H1 (cell line): ENCODE measurements at regions of chr11 and their contacts with region 1.

Region 1: DNA sequence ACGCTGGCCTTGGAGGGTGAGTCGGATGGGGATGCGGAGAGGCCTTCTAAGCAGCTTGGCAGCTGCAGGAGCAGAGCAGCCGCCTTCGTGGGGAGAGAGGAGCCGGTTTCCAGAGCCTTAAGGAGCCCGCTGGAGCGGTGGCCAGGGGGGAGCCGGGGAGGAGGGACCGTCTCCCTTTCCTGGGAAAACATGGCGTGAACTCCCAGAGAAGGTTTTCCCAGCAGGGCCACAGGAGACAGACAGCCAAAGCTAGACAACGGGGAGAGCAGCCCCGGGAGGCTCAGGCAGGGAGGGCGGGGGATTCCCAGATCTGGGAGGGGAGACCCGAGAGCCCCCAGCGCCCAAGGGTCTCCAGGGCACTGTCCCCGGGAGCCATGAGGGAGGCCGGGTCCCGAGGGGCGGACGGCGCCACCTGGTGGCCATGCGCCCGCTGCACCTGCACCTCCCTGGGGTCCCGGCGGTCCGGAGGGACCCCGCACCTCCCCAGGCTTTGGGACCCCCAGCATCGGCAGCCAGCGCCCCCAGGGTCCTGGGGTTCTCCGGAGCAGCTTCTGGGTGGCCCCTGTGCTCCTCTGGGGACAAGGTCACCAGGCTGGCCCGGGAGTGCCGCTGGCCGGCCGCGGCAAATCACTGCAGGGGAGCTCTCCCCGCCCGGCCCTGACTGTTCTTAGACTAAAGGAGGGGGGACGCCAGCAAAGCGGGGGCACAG is 2.4 kb upstream of the SYT8 start:
- DNase-seq: peak in 1 of 2 experiments; percentile 92
- H3K4me3 ChIP-seq: peak overlapping the region; percentile 9 to 68 (median 44); a peak in 7 of 8 replicates
- H3K27ac ChIP-seq: no peak overlapping the region
- H3K4me1 ChIP-seq: peaks cover 0 to 4% (median 2%) of the 10 kb centered on the region in 4 experiments; a peak in 4 of 7 replicates
- H3K27me3 ChIP-seq: peaks cover 0 to 6% (median 1%) of the 10 kb centered on the region in 4 experiments; a peak in 3 of 7 replicates
- CTCF ChIP-seq: peak in 2 of 3 experiments; percentile 76 to 89; a peak in 3 of 4 replicates
- EP300 ChIP-seq: no peak
- POLR2A ChIP-seq: no peak
- RAD21 ChIP-seq: peak; percentile 67 to 79

Region 2: DNA sequence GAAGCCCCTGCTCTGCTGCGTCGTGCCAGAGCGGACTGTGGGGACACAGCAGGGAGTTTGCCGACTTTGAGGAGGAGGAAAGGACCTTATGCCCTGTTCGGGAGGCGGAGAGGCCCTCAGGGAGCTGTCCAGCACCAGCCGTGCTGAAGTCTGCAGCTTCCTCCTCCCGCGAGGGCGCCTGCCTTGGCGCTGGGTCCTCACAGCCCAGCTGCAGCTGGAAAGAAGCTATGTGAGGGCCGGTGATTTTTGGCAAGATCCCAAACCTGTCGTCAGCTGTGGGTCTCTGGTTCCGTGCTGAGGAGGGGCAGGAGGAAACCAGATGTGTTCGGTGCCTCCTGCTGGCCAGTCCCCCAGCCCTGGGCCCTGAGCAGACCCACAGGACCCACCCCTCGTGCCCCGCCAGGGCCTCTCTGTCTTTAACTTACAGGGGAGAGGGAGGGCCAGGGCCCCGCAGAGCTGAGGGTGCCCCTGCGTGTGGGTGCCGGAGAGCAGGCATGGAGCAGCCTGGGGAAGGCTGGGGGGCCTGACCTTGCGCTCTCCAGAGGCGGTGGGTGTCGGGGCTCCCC is 430.6 kb before region 1 on chr11:
- CTCF ChIA-PET with region 1: no interaction called
- POLR2A ChIA-PET with region 1: no interaction called
- DNase-seq: peak in 1 of 2 experiments; percentile 92
- H3K4me3 ChIP-seq: no peak overlapping the region
- H3K27ac ChIP-seq: no peak overlapping the region
- H3K4me1 ChIP-seq: peaks cover 0 to 2% (median 0%) of the 10 kb centered on the region in 4 experiments; a peak in 1 of 7 replicates
- H3K27me3 ChIP-seq: no peaks in the 10 kb centered on the region
- CTCF ChIP-seq: no peak
- EP300 ChIP-seq: no peak
- POLR2A ChIP-seq: no peak
- RAD21 ChIP-seq: peak in 1 of 2 experiments; percentile 7; a peak in 2 of 4 replicates

Region 3: DNA sequence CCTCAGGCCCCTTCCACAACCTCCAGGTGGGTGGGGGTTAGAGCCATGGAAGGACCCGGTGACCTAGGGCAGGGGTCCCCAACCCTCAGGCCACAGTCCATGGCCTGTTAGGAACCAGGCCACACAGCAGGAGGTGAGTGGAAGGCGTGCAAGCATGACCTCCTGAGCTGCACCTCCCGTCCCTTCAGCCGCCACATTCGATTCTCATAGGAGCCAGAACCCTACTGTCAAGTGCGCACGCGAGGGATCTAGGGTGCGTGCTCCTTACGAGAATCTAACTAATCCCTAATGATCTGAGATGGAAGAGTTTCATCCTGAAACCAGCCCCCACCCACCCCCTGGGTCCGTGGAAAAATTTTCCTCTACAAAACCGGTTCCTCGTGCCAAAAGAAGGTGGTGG is 206.8 kb before region 1 on chr11:
- CTCF ChIA-PET with region 1: no interaction called
- POLR2A ChIA-PET with region 1: no interaction called
- DNase-seq: no peak
- H3K4me3 ChIP-seq: no peak overlapping the region
- H3K27ac ChIP-seq: no peak overlapping the region
- H3K4me1 ChIP-seq: peaks cover 0 to 4% (median 1%) of the 10 kb centered on the region in 4 experiments; a peak in 5 of 7 replicates
- H3K27me3 ChIP-seq: peaks cover 0 to 16% (median 3%) of the 10 kb centered on the region in 4 experiments; a peak in 5 of 7 replicates
- CTCF ChIP-seq: no peak
- EP300 ChIP-seq: no peak
- POLR2A ChIP-seq: no peak
- RAD21 ChIP-seq: no peak

Region 4: DNA sequence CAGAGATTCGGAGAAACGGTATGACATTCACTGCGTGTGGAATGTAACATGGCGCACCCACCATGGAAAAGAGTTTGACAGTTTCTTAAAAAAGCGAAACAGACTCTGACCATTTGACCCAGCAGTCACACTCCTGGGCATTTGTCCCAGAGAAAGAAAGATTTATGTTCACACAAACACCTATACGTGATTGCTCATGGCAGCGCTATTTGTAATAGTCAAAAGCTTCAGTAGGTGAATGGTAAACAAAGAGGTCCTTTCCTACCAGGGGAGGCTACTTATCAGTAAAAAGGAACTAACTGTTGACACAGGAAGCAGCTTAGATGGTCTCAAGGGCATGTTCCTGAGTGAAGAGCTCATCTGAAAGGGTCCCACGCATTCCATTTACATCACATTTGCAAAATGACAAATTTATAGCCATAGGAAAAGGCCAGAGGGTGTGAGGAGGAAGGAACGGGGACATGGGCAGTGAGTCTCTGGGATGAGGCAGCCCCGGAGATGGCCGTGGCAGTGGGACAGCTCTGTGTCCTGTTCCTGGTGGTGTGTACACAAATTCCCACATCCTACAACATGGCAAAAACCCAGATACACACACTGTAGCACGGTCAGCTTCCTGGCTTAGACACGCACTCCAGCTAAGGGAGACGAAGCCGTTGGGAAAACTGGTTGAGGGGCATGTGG is 150.0 kb before region 1 on chr11:
- CTCF ChIA-PET with region 1: interaction called, 20 read pairs
- POLR2A ChIA-PET with region 1: no interaction called
- DNase-seq: no peak
- H3K4me3 ChIP-seq: no peak overlapping the region
- H3K27ac ChIP-seq: no peak overlapping the region; the same call in 1 of the 2 replicates
- H3K4me1 ChIP-seq: no peaks in the 10 kb centered on the region
- H3K27me3 ChIP-seq: no peaks in the 10 kb centered on the region
- CTCF ChIP-seq: no peak
- EP300 ChIP-seq: no peak
- POLR2A ChIP-seq: no peak
- RAD21 ChIP-seq: no peak

Region 5: DNA sequence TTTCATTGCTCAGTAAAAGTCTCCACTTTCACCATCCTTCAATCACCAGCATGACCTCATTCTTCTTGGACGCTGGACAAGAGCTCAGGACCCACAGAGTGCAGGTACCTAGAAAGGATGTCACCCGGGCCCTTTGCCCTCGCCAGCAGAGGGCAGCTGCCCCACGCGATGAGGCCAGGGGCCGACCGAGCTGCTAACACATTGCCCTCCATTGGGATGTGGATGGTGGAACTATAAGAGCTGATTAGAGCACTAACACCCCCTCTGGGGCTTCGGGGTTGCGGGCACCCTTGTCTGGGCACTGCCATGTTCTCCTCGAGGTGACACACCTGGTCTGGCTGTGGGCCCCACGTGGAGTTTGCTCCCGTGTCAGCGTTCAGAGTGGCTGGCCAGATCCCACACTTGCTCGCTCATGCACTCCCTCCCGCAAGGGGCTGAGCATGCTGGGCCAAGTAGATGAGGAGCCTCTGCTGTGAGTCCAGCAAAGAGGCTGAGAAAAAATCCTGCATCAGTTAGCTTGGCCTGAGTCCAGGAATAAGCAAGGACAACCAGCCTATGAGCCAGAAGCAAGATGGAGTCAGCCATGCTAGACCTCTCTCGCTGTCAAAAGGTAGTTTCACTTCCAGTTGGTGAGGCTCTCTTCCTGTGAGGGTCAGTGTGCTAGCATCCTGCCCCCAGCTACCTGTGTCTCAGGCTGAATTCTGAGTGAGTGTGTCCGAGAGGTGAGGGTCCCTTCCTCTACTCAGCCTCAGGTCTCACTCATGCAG is 125.5 kb before region 1 on chr11:
- CTCF ChIA-PET with region 1: interaction called, 14 read pairs
- POLR2A ChIA-PET with region 1: no interaction called
- DNase-seq: no peak
- H3K4me3 ChIP-seq: no peak overlapping the region
- H3K27ac ChIP-seq: no peak overlapping the region
- H3K4me1 ChIP-seq: no peaks in the 10 kb centered on the region
- H3K27me3 ChIP-seq: peaks cover 0 to 5% (median 2%) of the 10 kb centered on the region in 4 experiments; a peak in 1 of 7 replicates
- CTCF ChIP-seq: peak; percentile 74 to 80 (median 80)
- EP300 ChIP-seq: no peak
- POLR2A ChIP-seq: no peak
- RAD21 ChIP-seq: peak; percentile 81 to 83

Region 6: DNA sequence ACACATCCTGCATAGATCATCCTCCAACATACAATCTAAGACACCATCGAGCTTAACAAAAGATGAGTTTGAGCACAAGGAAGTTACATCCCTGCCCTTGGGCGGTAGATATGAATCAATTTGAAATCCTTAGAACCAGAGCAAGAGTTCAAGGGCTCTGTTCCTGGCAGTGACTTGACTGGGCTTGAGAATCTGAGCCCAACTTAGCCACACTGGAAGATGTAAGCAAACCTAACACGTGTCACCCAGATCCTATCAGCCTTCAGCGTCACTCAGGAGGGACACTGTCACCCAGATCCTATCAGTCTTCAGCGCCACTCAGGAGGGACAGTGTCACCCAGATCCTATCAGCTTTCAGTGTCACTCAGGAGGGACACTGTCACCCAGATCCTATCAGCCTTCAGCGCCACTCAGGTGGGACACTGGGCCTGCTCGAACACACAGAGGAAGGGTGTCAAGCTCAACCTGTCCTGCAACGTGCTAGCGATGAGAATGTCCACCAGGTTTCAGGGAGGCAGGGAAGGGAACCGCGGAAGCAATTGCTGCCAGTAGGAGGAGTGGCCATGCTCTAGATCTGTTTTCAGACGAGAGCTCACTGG is 35.9 kb before region 1 on chr11:
- CTCF ChIA-PET with region 1: interaction called, 11 read pairs
- POLR2A ChIA-PET with region 1: no interaction called
- DNase-seq: no peak
- H3K4me3 ChIP-seq: no peak overlapping the region
- H3K27ac ChIP-seq: no peak overlapping the region
- H3K4me1 ChIP-seq: no peaks in the 10 kb centered on the region
- H3K27me3 ChIP-seq: peaks cover 0 to 3% (median 1%) of the 10 kb centered on the region in 4 experiments; a peak in 2 of 7 replicates
- CTCF ChIP-seq: peak; percentile 36 to 65 (median 51)
- EP300 ChIP-seq: no peak
- POLR2A ChIP-seq: no peak
- RAD21 ChIP-seq: peak in 1 of 2 experiments; percentile 12; a peak in 1 of 4 replicates

Region 7: DNA sequence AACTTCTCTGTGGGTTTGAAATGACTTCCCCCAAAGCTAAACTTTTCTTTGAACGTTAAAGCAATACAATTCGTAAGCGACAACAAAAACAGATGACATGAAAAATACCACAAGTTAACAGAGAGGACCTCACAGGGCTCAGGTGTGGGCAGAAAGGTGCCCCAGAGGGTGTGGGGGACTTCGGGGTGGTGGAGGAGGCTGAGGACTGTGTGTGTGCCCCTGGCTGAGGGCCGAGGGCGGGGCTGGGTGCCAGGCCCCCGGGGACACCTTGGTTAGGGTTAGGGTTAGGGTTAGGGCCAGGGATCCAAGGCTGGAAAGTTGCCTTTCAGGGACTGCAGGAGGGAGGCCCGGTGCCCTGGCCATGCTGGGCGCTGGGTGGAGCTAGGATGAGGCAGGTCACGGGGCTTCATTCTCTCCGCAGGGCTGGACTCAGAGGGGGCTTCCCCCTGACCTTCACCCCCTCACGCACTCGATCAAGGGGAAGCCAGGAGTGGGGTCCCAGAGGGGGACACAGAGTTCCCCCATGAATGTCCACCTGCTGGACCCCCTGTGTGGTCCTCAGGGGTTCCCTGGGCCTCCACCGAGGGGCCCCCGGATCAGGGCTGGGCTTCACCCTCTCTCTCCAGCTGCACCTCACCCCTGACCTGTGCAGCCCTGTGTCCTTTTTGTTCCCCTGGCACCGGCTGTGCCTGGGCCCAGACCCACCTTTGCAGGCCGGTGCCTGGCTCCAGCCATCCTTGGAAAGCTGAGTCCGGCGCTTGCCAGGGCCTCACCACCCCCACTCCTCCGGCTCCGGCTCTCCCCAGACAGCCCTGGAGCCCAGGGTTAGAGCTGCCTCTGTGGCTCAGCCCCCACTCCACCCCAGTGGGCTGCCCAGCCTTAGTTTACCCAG is 13.4 kb after region 1 on chr11:
- CTCF ChIA-PET with region 1: interaction called, 22 read pairs
- POLR2A ChIA-PET with region 1: no interaction called
- DNase-seq: no peak
- H3K4me3 ChIP-seq: no peak overlapping the region
- H3K27ac ChIP-seq: no peak overlapping the region
- H3K4me1 ChIP-seq: peaks cover 0 to 3% (median 0%) of the 10 kb centered on the region in 4 experiments; a peak in 1 of 7 replicates
- H3K27me3 ChIP-seq: no peaks in the 10 kb centered on the region
- CTCF ChIP-seq: no peak
- EP300 ChIP-seq: no peak
- POLR2A ChIP-seq: no peak
- RAD21 ChIP-seq: no peak

Region 8: GRCh38 chr11:1876361-1877063 is 44.1 kb after region 1 on chr11:
- CTCF ChIA-PET with region 1: interaction called, 27 read pairs
- POLR2A ChIA-PET with region 1: no interaction called
- DNase-seq: peak; percentile 25 to 84
- H3K4me3 ChIP-seq: no peak overlapping the region
- H3K27ac ChIP-seq: no peak overlapping the region
- H3K4me1 ChIP-seq: no peaks in the 10 kb centered on the region; a peak in 1 of 7 replicates
- H3K27me3 ChIP-seq: no peaks in the 10 kb centered on the region
- CTCF ChIP-seq: peak; percentile 73 to 78 (median 75)
- EP300 ChIP-seq: no peak
- POLR2A ChIP-seq: no peak
- RAD21 ChIP-seq: peak; percentile 48 to 63; a peak in 3 of 4 replicates

Region 9: DNA sequence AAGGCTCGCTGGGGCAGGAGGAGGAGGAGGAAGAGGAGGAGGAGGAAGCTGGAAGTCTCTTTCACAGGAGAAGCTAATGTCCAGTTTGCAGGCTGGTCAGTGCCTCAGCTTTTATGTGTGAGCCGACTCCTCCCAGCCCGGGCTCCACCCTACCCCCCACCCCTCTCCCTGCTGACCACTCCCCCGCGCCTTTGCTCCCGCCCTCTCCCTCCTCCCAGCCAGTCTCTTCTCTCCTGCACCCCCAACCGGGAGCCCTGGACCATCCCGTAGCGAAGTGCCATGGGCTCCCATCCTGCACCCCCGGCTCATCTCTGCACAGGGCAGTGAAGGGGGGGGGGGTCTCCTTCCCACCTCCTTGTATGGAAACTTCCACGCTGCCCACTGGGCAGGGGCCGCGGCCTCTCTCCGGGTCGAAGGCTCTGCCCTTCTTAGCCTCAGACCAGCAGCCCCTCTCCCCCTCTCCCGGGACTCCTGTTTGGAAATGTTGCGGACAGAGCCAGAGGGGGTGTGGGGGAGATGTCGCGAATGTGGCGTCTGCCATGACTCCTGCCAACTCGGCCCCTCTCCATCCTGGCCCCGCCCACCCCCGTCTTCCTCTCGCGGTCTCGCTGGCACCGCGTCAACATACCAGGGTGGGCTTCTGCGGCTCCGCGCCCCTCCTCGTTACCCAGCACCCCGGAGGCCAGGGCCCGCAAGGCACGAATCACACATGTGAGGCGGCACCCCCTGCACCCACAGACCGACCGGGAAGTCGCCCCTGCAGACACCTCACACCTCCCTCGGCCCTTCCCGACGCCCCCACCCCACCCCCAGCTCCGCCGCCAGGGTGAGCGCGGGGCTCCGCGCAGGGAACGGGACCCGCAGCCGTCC is 305.1 kb after region 1 on chr11:
- CTCF ChIA-PET with region 1: interaction called, 11 read pairs
- POLR2A ChIA-PET with region 1: no interaction called
- DNase-seq: peak in 1 of 2 experiments; percentile 82
- H3K4me3 ChIP-seq: peak overlapping the region; percentile 26 to 65 (median 30)
- H3K27ac ChIP-seq: no peak overlapping the region
- H3K4me1 ChIP-seq: peaks cover 0 to 12% (median 7%) of the 10 kb centered on the region in 4 experiments; a peak in 6 of 7 replicates
- H3K27me3 ChIP-seq: peaks cover 52 to 86% (median 76%) of the 10 kb centered on the region in 4 experiments
- CTCF ChIP-seq: no peak
- EP300 ChIP-seq: no peak
- POLR2A ChIP-seq: no peak
- RAD21 ChIP-seq: no peak